Esophagus muscularis mucosa (tissue), 4 donors: ENCODE measurements at regions of chr17 and their contacts with region 1.

Region 1: DNA sequence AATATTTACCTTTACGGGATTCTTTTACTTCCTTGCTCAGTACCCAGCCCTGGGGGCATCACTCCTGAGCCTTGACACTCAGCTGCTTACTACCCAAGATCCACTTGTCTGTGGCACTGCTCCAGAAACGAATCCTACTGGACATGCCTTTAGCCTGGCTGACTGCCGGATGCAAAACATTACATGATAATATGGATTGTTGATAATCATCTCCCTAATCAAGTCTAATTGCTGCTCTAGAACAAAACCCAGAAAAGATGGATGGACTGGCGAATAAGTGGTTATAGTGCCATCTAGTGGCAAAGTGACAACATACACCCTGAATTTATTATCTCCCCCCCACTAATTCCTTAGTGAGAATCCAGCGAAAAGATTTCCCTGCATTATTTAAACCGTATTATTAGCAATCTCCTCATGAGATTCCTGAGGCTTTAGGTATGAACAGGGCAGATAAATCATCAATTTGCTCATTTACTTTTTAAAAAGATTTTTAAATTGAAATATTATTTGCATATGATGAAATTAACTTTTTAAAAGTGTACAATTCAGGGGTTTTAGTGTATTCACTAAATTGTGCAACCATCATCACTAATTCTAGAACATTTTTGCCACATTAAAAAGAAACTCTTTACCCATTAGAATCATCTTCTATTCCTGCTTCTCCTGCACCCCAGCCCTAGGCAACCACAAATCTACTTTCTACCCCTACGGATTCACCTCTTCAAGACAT is 61.6 kb downstream of the RGS9 start:
- DNase-seq: no peak
- H3K4me3 ChIP-seq: no peak overlapping the region
- H3K27ac ChIP-seq: no peak overlapping the region
- H3K4me1 ChIP-seq: peaks cover 0 to 7% (median 3%) of the 10 kb centered on the region in 4 donors
- H3K27me3 ChIP-seq: no peaks in the 10 kb centered on the region
- CTCF ChIP-seq: peak; percentile 72 to 81 (median 74)
- EP300 ChIP-seq: no peak
- POLR2A ChIP-seq: no peak

Region 2: GRCh38 chr17:64968652-64969501 is 229.9 kb before region 1 on chr17:
- intact Hi-C with region 1: loop called (anchors 10 kb)
- DNase-seq: no peak
- H3K4me3 ChIP-seq: no peak overlapping the region
- H3K27ac ChIP-seq: no peak overlapping the region
- H3K4me1 ChIP-seq: peaks cover 10 to 35% (median 27%) of the 10 kb centered on the region in 4 donors
- H3K27me3 ChIP-seq: no peaks in the 10 kb centered on the region
- CTCF ChIP-seq: no peak
- EP300 ChIP-seq: no peak
- POLR2A ChIP-seq: no peak